IMR-90 (cell line): ENCODE measurements at regions of chr3 and their contacts with region 1.

Region 1: GRCh38 chr3:14780927-14781507 is 37.7 kb upstream of the FGD5 start:
- DNase-seq: peak; percentile 30
- ATAC-seq: peak; percentile 87
- H3K4me3 ChIP-seq: no peak overlapping the region
- H3K27ac ChIP-seq: no peak overlapping the region
- H3K4me1 ChIP-seq: no peaks in the 10 kb centered on the region
- H3K27me3 ChIP-seq: peaks cover 4% of the 10 kb centered on the region; the same call in 1 of the 2 replicates
- CTCF ChIP-seq: peak; percentile 46
- POLR2A ChIP-seq: no peak
- RAD21 ChIP-seq: peak; percentile 54

Region 2: GRCh38 chr3:14508961-14509795 is 271.8 kb before region 1 on chr3:
- CTCF ChIA-PET with region 1: no interaction called
- POLR2A ChIA-PET with region 1: no interaction called
- dilution Hi-C with region 1: no loop called
- in situ Hi-C with region 1: no loop called
- intact Hi-C with region 1: loop called (anchors 5 kb)
- DNase-seq: peak; percentile 18
- ATAC-seq: peak; percentile 93
- H3K4me3 ChIP-seq: no peak overlapping the region
- H3K27ac ChIP-seq: no peak overlapping the region
- H3K4me1 ChIP-seq: no peaks in the 10 kb centered on the region
- H3K27me3 ChIP-seq: peaks cover 17% of the 10 kb centered on the region
- CTCF ChIP-seq: peak; percentile 71
- POLR2A ChIP-seq: no peak
- RAD21 ChIP-seq: peak; percentile 68

Region 3: GRCh38 chr3:14672588-14672987 is 108.4 kb before region 1 on chr3:
- CTCF ChIA-PET with region 1: interaction called, 13 read pairs
- POLR2A ChIA-PET with region 1: no interaction called
- dilution Hi-C with region 1: no loop called
- in situ Hi-C with region 1: no loop called
- intact Hi-C with region 1: loop called (anchors 1 kb)
- DNase-seq: no peak
- ATAC-seq: no peak
- H3K4me3 ChIP-seq: no peak overlapping the region
- H3K27ac ChIP-seq: no peak overlapping the region
- H3K4me1 ChIP-seq: no peaks in the 10 kb centered on the region
- H3K27me3 ChIP-seq: no peaks in the 10 kb centered on the region
- CTCF ChIP-seq: no peak
- POLR2A ChIP-seq: no peak
- RAD21 ChIP-seq: no peak

Region 4: DNA sequence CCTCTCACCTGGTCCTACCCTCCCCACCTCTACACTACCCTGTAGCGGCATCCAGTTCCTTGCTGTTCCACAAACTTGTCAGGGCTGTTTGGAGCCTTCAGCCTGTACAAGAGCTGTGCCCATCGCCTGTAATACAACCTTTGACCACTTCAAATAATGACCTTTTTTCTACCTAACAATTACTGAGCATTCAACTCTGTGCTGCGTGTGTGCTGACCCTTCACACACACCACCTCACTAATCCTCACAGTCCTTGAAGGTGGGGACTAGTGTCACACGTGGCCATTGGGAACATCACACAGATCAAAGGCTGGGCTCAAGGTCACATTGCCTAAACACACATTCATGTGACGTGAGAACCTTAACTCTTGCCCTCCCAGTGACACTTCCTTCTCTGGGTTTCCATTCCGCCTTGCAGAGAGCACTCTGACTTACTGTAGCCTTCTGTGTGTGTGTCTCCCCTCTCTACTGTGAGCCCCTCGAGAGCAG is 103.0 kb before region 1 on chr3:
- CTCF ChIA-PET with region 1: interaction called, 13 read pairs
- POLR2A ChIA-PET with region 1: no interaction called
- dilution Hi-C with region 1: no loop called
- in situ Hi-C with region 1: no loop called
- intact Hi-C with region 1: loop called (anchors 1 kb)
- DNase-seq: no peak
- ATAC-seq: no peak
- H3K4me3 ChIP-seq: no peak overlapping the region
- H3K27ac ChIP-seq: no peak overlapping the region
- H3K4me1 ChIP-seq: no peaks in the 10 kb centered on the region
- H3K27me3 ChIP-seq: no peaks in the 10 kb centered on the region
- CTCF ChIP-seq: no peak
- POLR2A ChIP-seq: no peak
- RAD21 ChIP-seq: no peak

Region 5: DNA sequence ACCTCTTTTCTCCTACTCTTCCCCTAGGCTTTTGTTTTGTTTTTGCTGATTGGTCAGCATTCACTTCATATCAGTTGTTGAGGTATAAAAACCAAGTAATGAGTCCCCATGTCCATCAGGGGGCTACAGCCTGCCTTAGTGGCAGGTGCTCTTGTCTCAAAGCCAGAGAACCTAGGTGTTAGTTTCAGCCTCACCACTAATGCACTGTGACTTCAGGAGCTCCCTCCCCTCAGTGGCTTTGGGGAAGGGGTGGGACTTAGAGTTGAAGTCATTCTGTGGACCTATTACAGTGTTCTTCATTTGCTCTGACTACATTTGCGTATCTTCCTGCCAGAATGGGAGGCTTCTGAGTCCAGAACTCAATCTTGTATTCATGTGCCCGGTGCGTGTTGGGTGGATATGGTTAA is 208.0 kb after region 1 on chr3:
- CTCF ChIA-PET with region 1: no interaction called
- POLR2A ChIA-PET with region 1: no interaction called
- dilution Hi-C with region 1: no loop called
- in situ Hi-C with region 1: no loop called
- intact Hi-C with region 1: no loop called
- DNase-seq: no peak
- ATAC-seq: no peak
- H3K4me3 ChIP-seq: no peak overlapping the region
- H3K27ac ChIP-seq: no peak overlapping the region
- H3K4me1 ChIP-seq: peaks cover 5% of the 10 kb centered on the region; the same call in 1 of the 2 replicates
- H3K27me3 ChIP-seq: no peaks in the 10 kb centered on the region
- CTCF ChIP-seq: no peak
- POLR2A ChIP-seq: no peak
- RAD21 ChIP-seq: no peak